CD8-positive, alpha-beta memory T cell (primary cell): ENCODE measurements at regions of chr11 and their contacts with region 1.

Region 1: GRCh38 chr11:75248690-75249268 is 8.2 kb downstream of the TPBGL start:
- DNase-seq: peak; percentile 77 to 88 (median 78)
- H3K4me3 ChIP-seq: no peak overlapping the region
- H3K4me3 Mint-ChIP-seq: no peak overlapping the region
- H3K27ac ChIP-seq: no peak overlapping the region
- H3K27ac Mint-ChIP-seq: no peak overlapping the region
- H3K4me1 ChIP-seq: no peaks in the 10 kb centered on the region
- H3K4me1 Mint-ChIP-seq: no peaks in the 10 kb centered on the region
- H3K27me3 ChIP-seq: no peaks in the 10 kb centered on the region
- H3K27me3 Mint-ChIP-seq: peaks cover 15% of the 10 kb centered on the region in 2 donors

Region 2: DNA sequence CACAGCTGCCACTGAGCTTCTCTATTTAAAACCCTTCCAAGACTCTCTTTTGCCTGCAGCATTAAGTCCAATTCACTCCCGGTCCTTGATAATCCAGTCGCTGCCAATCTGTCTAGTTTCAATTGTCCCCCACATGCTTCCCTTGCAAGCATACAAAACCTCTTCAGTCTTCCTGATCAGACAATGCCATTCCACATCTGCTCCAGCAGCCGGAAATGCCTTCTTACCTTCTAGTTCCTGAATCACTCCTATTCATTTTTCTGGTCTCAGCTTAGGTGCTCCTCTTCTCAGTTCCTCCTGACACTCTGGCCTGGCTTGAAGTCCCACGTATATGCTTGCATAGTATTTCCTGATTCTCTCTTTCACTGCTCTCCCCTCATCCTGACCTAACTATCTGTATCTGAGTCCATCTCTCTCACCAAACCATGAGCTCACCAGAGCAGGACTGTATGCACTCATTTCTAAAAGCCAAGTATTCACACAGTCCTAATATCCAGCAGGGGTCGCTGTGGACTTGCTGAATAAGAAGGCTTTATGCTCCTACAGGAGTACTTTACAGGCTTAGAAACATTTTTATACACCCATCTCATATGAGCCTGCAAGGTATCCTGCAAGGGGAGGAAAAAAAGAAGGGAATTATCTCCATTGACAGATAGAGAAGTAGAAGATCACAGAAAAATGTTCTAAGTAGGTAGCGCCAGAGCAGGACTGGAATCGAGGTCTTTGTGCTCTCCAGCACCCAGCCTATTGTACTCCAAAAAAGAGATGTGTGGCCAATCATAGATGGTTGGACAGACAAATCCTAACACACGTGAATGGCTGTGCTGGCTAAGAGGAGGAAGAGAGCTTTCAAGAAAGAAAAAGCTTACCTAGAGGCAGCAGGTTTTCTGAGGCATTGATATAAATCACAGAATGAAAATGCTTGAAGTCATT is 319.1 kb before region 1 on chr11:
- CTCF ChIA-PET with region 1: interaction called, 10 read pairs
- POLR2A ChIA-PET with region 1: no interaction called
- DNase-seq: peak; percentile 49 to 69 (median 52)
- H3K4me3 ChIP-seq: no peak overlapping the region
- H3K4me3 Mint-ChIP-seq: no peak overlapping the region
- H3K27ac ChIP-seq: no peak overlapping the region
- H3K27ac Mint-ChIP-seq: no peak overlapping the region
- H3K4me1 ChIP-seq: no peaks in the 10 kb centered on the region
- H3K4me1 Mint-ChIP-seq: peaks cover 0 to 8% (median 4%) of the 10 kb centered on the region in 3 donors
- H3K27me3 ChIP-seq: no peaks in the 10 kb centered on the region
- H3K27me3 Mint-ChIP-seq: no peaks in the 10 kb centered on the region

Region 3: GRCh38 chr11:75022759-75023396 is 225.9 kb before region 1 on chr11:
- CTCF ChIA-PET with region 1: interaction called, 38 read pairs
- POLR2A ChIA-PET with region 1: no interaction called
- DNase-seq: peak; percentile 50 to 76 (median 52)
- H3K4me3 ChIP-seq: no peak overlapping the region
- H3K4me3 Mint-ChIP-seq: no peak overlapping the region
- H3K27ac ChIP-seq: no peak overlapping the region
- H3K27ac Mint-ChIP-seq: no peak overlapping the region
- H3K4me1 ChIP-seq: no peaks in the 10 kb centered on the region
- H3K4me1 Mint-ChIP-seq: no peaks in the 10 kb centered on the region
- H3K27me3 ChIP-seq: no peaks in the 10 kb centered on the region
- H3K27me3 Mint-ChIP-seq: no peaks in the 10 kb centered on the region